Naive thymus-derived CD8-positive, alpha-beta T cell (primary cell): ENCODE measurements at regions of chr1 and their contacts with region 1.

Region 1: DNA sequence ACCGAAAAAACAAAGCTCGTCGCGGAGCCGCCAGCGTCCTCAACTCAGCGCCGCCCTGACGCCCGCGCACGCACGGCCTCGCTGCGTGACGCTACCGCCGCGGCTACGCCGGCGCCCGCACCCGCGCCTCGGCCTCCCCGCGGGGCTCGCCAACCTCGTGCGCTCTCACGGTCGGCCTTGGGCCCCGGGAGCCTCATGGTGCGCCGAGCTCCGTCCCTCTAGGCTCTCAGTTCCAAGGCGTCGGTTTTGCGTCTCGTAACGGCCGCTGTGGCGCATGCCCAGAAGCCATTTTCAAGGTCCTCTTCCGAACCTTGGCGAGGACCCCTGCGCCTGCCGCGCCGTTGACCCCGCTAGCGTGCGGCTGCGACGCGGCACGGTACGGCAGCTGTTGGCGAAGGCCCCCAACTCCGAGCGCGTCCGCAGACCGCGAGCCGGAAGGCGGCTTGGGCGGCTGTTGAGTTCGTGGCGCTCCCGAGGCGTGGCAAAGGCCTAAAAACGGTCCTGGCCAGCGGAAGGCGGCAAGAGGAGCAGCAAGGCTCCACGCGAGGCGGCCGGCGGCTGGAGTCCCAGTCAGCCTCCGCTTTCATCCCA is at the start of gene HENMT1:
- DNase-seq: peak; percentile 67 to 92 (median 86)
- ATAC-seq: peak; percentile 85 to 89
- H3K4me3 Mint-ChIP-seq: peak within 1 kb of the TSS; percentile 81 to 90 (median 88)
- H3K27ac Mint-ChIP-seq: peak within 1 kb of the TSS; percentile 94 to 99 (median 98)
- H3K4me1 Mint-ChIP-seq: peaks cover 15 to 52% (median 45%) of the 10 kb centered on the region in 4 donors
- H3K27me3 Mint-ChIP-seq: no peaks in the 10 kb centered on the region
- polyA plus RNA-seq, gene HENMT1: 38.1 to 53.8 (median 42.4) TPM

Region 2: GRCh38 chr1:108559215-108560186 is 101.6 kb before region 1 on chr1 and contains the start of gene EEIG2:
- POLR2A ChIA-PET with region 1: interaction called, 32 read pairs
- DNase-seq: peak; percentile 85 to 93 (median 90)
- ATAC-seq: peak; percentile 83 to 88
- H3K4me3 Mint-ChIP-seq: peak within 1 kb of the TSS; percentile 92 to 98 (median 97)
- H3K27ac Mint-ChIP-seq: peak within 1 kb of the TSS; percentile 87 to 96 (median 93)
- H3K4me1 Mint-ChIP-seq: peaks cover 15 to 42% (median 35%) of the 10 kb centered on the region in 4 donors
- H3K27me3 Mint-ChIP-seq: peaks cover 0 to 2% (median 0%) of the 10 kb centered on the region in 5 donors
- polyA plus RNA-seq, gene EEIG2: 0.48 to 2.4 (median 0.75) TPM

Region 3: GRCh38 chr1:108615544-108615943 is 45.6 kb before region 1 on chr1:
- POLR2A ChIA-PET with region 1: no interaction called
- DNase-seq: no peak
- ATAC-seq: no peak
- H3K4me3 Mint-ChIP-seq: no peak overlapping the region
- H3K27ac Mint-ChIP-seq: no peak overlapping the region
- H3K4me1 Mint-ChIP-seq: no peaks in the 10 kb centered on the region
- H3K27me3 Mint-ChIP-seq: no peaks in the 10 kb centered on the region

Region 4: DNA sequence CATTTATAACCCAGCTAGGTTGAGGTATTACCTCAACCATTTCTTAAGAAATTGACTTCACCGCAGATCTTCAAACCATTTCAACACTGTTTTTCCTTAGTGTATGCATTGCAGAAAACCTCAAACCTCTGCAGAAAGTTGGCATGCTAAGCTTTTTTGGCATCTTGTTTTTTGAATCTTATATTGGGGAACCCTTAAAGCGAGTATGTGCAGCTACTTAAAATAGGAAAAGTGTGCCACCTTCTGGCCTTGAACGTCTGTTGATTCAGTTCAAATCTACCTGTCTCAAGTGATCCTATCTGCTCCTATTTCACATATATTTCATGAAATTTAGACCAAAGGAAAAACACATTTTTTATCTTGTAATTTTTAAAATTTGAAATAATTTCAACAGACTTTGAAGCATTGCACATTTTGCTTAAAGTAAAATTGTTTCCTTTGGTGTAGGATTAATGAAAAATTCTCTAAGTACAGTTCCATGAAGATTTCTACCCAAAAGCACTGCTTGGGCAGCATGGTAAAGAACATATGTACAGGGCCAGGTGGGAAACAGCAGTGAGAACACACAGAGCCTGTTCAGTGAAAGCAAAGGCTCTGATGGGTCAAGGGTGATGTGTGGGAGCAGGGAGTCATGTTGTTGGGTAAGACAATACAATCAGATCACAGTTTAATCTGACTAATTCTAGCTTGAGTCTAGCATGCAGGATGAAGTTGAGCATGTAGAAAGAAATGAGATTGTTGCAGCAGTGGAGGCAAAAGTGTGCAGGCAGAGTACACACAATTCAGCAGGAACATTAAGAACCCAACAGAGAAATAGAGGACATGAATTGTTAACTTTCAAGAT is 17.4 kb before region 1 on chr1:
- POLR2A ChIA-PET with region 1: interaction called, 484 read pairs
- DNase-seq: peak in 9 of 10 donors; percentile 31 to 80 (median 60)
- ATAC-seq: peak; percentile 17 to 24
- H3K4me3 Mint-ChIP-seq: peak overlapping the region in 8 of 10 donors; percentile 12 to 84 (median 48)
- H3K27ac Mint-ChIP-seq: peak overlapping the region; percentile 34 to 100 (median 99)
- H3K4me1 Mint-ChIP-seq: peaks cover 48 to 83% (median 80%) of the 10 kb centered on the region in 4 donors
- H3K27me3 Mint-ChIP-seq: no peaks in the 10 kb centered on the region

Region 5: GRCh38 chr1:108678706-108679105 is 17.6 kb after region 1 on chr1:
- POLR2A ChIA-PET with region 1: interaction called, 20 read pairs
- DNase-seq: no peak
- ATAC-seq: no peak
- H3K4me3 Mint-ChIP-seq: no peak overlapping the region
- H3K27ac Mint-ChIP-seq: no peak overlapping the region
- H3K4me1 Mint-ChIP-seq: peaks cover 4 to 13% (median 6%) of the 10 kb centered on the region in 4 donors
- H3K27me3 Mint-ChIP-seq: peaks cover 0 to 3% (median 0%) of the 10 kb centered on the region in 5 donors